PC-3 (cell line): ENCODE measurements at regions of chr3 and their contacts with region 1.

Region 1: GRCh38 chr3:22665528-22665927 is 537.6 kb upstream of the UBE2E2 start:
- DNase-seq: no peak
- ATAC-seq: no peak
- H3K4me3 ChIP-seq: no peak overlapping the region
- H3K27ac ChIP-seq: no peak overlapping the region
- H3K4me1 ChIP-seq: no peaks in the 10 kb centered on the region
- H3K27me3 ChIP-seq: no peaks in the 10 kb centered on the region
- CTCF ChIP-seq: no peak

Region 2: GRCh38 chr3:22627993-22628499 is 37.5 kb before region 1 on chr3:
- CTCF ChIA-PET with region 1: no interaction called
- POLR2A ChIA-PET with region 1: no interaction called
- intact Hi-C with region 1: loop called (anchors 5 kb)
- DNase-seq: no peak
- ATAC-seq: no peak
- H3K4me3 ChIP-seq: no peak overlapping the region
- H3K27ac ChIP-seq: no peak overlapping the region
- H3K4me1 ChIP-seq: no peaks in the 10 kb centered on the region
- H3K27me3 ChIP-seq: no peaks in the 10 kb centered on the region
- CTCF ChIP-seq: no peak

Region 3: GRCh38 chr3:22677522-22677921 is 12.0 kb after region 1 on chr3:
- CTCF ChIA-PET with region 1: no interaction called
- POLR2A ChIA-PET with region 1: no interaction called
- intact Hi-C with region 1: no loop called
- DNase-seq: no peak
- ATAC-seq: no peak
- H3K4me3 ChIP-seq: no peak overlapping the region
- H3K27ac ChIP-seq: no peak overlapping the region
- H3K4me1 ChIP-seq: no peaks in the 10 kb centered on the region
- H3K27me3 ChIP-seq: no peaks in the 10 kb centered on the region
- CTCF ChIP-seq: no peak